Activated naive CD4-positive, alpha-beta T cell treated with anti-CD3 and anti-CD28 coated beads, Interleukin-2, amount 10 ng/mL, durations not matched to agents 7 days and 5 days (primary cell): ENCODE measurements at regions of chr1 and their contacts with region 1.

Region 1: GRCh38 chr1:24201941-24202440 is 14.9 kb upstream of the IFNLR1 start:
- DNase-seq: peak; percentile 77
- H3K4me3 Mint-ChIP-seq: no peak overlapping the region
- H3K27ac Mint-ChIP-seq: no peak overlapping the region
- H3K4me1 Mint-ChIP-seq: peaks cover 11% of the 10 kb centered on the region
- H3K27me3 Mint-ChIP-seq: peaks cover 27% of the 10 kb centered on the region

Region 2: GRCh38 chr1:24190983-24191461 is 11.0 kb before region 1 on chr1:
- CTCF ChIA-PET with region 1: interaction called, 24 read pairs
- DNase-seq: no peak
- H3K4me3 Mint-ChIP-seq: no peak overlapping the region
- H3K27ac Mint-ChIP-seq: peak overlapping the region; percentile 88
- H3K4me1 Mint-ChIP-seq: peaks cover 63% of the 10 kb centered on the region
- H3K27me3 Mint-ChIP-seq: peaks cover 17% of the 10 kb centered on the region

Region 3: DNA sequence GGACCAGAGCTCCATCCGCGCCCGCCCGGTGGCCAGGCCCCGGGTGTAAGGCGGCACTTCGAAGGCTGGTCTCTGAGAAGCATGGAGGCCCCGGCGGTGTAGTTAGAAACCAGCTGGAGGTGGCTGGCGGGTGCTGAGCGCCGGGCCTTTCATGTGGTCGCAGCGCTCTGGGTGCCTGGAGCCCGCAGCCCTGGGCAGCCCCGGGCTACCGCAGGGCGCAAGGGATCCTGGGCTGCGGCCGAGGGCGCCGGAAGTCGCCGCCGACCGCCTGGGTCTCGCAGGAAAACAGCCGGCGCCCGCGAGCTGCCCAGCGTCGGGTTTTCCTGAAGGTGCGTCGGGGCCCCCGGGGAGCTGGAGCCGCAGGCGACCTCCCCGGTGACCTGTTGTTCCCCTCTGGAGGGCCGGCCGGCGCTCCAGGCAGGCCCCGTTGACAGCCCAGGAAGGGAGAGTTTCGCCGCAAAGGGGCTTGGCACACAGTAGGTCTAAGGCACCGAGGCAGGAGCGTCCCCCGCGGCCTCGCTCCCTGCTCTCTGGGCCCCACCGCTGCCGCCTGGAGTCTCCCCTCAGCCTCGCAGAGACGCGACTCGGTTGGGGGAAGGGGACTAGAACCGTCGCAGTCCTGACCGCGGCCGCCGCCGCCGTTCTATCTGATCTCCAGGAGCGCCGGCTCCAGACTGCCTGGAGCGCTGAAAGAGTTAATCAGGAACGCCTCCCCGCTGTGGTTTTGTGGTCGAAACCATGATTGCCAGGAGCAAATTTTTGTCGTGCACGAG is 119.9 kb after region 1 on chr1:
- CTCF ChIA-PET with region 1: interaction called, 10 read pairs
- DNase-seq: peak; percentile 85
- H3K4me3 Mint-ChIP-seq: peak overlapping the region; percentile 69
- H3K27ac Mint-ChIP-seq: peak overlapping the region; percentile 75
- H3K4me1 Mint-ChIP-seq: peaks cover 48% of the 10 kb centered on the region
- H3K27me3 Mint-ChIP-seq: peaks cover 100% of the 10 kb centered on the region

Region 4: GRCh38 chr1:24391882-24392603 is 190.1 kb after region 1 on chr1:
- CTCF ChIA-PET with region 1: interaction called, 383 read pairs
- DNase-seq: peak; percentile 74
- H3K4me3 Mint-ChIP-seq: peak overlapping the region; percentile 62
- H3K27ac Mint-ChIP-seq: peak overlapping the region; percentile 91
- H3K4me1 Mint-ChIP-seq: peaks cover 36% of the 10 kb centered on the region
- H3K27me3 Mint-ChIP-seq: no peaks in the 10 kb centered on the region